ENCODE measurements at regions of chr19 and their contacts with region 1.

Region 1: DNA sequence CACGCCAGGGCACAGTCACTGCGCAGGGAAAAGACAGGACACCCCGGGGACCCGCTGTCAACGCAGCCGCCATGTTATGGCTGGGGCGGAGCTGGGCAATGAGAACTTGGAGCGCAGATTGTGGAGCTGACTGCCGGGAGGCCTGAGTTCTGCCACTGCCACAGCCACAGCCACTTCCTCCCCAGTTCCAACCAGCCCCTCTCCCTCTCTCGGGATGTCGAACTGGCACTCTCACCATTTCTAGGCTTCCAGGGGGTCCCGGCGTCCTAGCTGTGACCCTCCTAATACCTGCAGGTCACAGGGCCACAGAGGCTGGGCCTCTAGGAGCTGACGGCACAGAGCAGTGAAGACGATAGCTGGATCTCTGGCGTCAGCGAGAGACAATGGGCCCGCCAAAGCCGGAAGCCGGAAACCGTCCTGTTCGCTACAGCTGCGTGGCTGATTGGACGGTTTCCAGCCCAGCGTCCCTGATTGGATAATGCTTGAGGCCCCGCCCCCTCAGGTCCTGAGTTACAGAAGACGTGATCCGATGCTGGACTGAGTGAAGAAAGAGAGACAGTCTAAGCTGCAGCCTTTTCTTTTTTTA is at the start of gene ZNF506:
- DNase-seq: peak; percentile 99
- ATAC-seq: peak; percentile 88
- H3K4me3 Mint-ChIP-seq: peak within 1 kb of the TSS; percentile 96
- H3K27ac Mint-ChIP-seq: peak within 1 kb of the TSS; percentile 99
- H3K4me1 Mint-ChIP-seq: peaks cover 43% of the 10 kb centered on the region
- H3K27me3 Mint-ChIP-seq: no peaks in the 10 kb centered on the region
- total RNA-seq, gene ZNF506: 33.3 to 41.3 TPM

Region 2: GRCh38 chr19:19597809-19598306 is 223.6 kb before region 1 on chr19:
- CTCF ChIA-PET with region 1: no interaction called
- POLR2A ChIA-PET with region 1: interaction called, 5 read pairs
- intact Hi-C with region 1: loop called (anchors 1 to 2 kb)
- DNase-seq: peak; percentile 70
- ATAC-seq: peak; percentile 66
- H3K4me3 Mint-ChIP-seq: peak overlapping the region; percentile 67
- H3K27ac Mint-ChIP-seq: peak overlapping the region; percentile 97
- H3K4me1 Mint-ChIP-seq: peaks cover 82% of the 10 kb centered on the region
- H3K27me3 Mint-ChIP-seq: no peaks in the 10 kb centered on the region

Region 3: GRCh38 chr19:19860756-19861390 is 39.4 kb after region 1 on chr19:
- CTCF ChIA-PET with region 1: interaction called, 8 read pairs
- POLR2A ChIA-PET with region 1: interaction called, 12 read pairs
- intact Hi-C with region 1: loop called (anchors 1 to 2 kb)
- DNase-seq: peak; percentile 86
- ATAC-seq: peak; percentile 72
- H3K4me3 Mint-ChIP-seq: peak overlapping the region; percentile 83
- H3K27ac Mint-ChIP-seq: peak overlapping the region; percentile 82
- H3K4me1 Mint-ChIP-seq: peaks cover 7% of the 10 kb centered on the region
- H3K27me3 Mint-ChIP-seq: no peaks in the 10 kb centered on the region

Region 4: GRCh38 chr19:19873381-19873780 is 51.9 kb after region 1 on chr19:
- CTCF ChIA-PET with region 1: no interaction called
- POLR2A ChIA-PET with region 1: interaction called, 3 read pairs
- intact Hi-C with region 1: loop called in 1 of 2 experiments (anchors 1 kb)
- DNase-seq: no peak
- ATAC-seq: peak; percentile 58
- H3K4me3 Mint-ChIP-seq: no peak overlapping the region
- H3K27ac Mint-ChIP-seq: no peak overlapping the region
- H3K4me1 Mint-ChIP-seq: peaks cover 41% of the 10 kb centered on the region
- H3K27me3 Mint-ChIP-seq: no peaks in the 10 kb centered on the region

Region 5: DNA sequence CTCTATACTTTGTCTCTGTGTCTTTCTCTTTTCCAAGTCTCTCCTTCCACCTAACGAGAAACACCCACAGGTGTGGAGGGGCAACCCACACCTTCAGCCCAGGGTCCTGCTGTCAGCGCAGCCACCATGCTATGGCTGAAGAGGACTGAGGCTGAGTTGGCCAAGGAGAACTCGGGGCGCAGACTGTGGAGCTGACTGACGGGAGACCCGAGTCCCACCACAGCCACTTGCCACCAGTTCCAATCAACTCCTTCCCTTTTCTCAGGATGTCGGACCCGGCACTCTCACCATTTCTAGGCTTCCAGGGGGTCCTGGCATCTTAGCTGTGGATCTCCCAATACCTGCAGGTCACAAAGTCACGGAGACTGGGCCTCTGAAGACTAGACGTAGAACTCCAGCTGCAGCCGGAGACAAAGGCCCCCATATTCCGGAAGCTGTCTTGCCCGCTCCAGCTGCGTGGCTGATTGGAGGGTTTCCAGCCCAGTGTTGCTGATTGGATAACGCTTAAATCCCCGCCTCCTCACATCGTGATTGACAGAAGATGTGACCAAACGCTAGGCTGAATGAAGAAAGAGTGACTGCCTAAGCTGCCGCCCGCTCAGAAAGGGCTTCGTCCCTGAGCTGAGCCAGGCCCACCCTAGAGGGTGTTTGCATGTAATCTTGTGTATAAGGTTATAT is 1747.5 kb after region 1 on chr19:
- CTCF ChIA-PET with region 1: no interaction called
- POLR2A ChIA-PET with region 1: no interaction called
- intact Hi-C with region 1: loop called in 1 of 2 experiments (anchors 5 kb)
- DNase-seq: peak; percentile 92
- ATAC-seq: peak; percentile 97
- H3K4me3 Mint-ChIP-seq: peak overlapping the region; percentile 86
- H3K27ac Mint-ChIP-seq: peak overlapping the region; percentile 100
- H3K4me1 Mint-ChIP-seq: peaks cover 29% of the 10 kb centered on the region
- H3K27me3 Mint-ChIP-seq: no peaks in the 10 kb centered on the region

Measured in activated CD4-positive, alpha-beta T cell treated with anti-CD3 and anti-CD28 coated beads for 36 hours (primary cell).